Transverse colon (tissue), 4 donors: ENCODE measurements at regions of chr20 and their contacts with region 1.

Region 1: DNA sequence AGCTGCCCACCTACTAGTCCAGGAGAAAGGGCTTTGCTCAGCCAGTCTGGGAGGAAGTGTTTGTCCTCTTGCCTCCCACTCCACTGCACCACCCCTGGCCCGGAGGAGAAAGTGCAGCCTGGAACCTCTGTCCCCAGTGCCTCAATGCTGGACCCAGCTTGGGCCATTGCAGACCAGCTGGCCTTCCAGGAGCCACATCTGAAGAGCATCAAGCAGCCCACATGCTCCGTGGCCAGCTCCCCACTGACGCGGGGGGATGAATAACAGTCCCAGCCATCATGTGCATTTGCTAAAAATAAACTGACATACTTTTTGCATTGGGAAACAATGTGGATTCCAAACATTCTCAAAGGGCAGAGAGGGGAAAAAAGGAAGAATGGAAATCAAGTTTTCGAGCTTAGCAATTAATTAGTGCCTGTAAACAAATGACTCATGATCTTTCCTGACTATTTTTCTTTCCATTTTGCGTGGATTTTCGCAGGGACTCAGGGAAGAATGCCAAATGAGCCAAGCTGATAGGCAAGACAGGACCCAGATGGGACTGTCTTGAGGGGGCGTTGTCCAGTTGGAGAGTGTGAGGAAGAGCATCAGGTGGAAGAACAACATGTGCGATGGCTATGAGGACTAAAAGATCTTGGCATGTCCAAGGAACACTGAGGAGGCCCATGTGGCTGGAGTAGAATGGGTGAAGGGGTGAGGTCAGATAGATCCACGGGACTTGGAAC is 34.1 kb downstream of the CEBPB start:
- DNase-seq: peak; percentile 65
- H3K4me3 ChIP-seq: no peak overlapping the region
- H3K27ac ChIP-seq: peak overlapping the region; percentile 56 to 77 (median 61)
- H3K4me1 ChIP-seq: peaks cover 0 to 6% (median 4%) of the 10 kb centered on the region in 4 donors
- H3K27me3 ChIP-seq: no peaks in the 10 kb centered on the region
- CTCF ChIP-seq: peak in 1 of 5 experiments; percentile 11
- EP300 ChIP-seq: peak; percentile 37
- POLR2A ChIP-seq: no peak

Region 2: GRCh38 chr20:50338479-50339391 is 114.0 kb after region 1 on chr20:
- in situ Hi-C with region 1: loop called in 1 of 4 experiments (anchors 25 kb)
- intact Hi-C with region 1: no loop called
- DNase-seq: no peak
- H3K4me3 ChIP-seq: no peak overlapping the region
- H3K27ac ChIP-seq: peak overlapping the region; percentile 30 to 68 (median 57)
- H3K4me1 ChIP-seq: peaks cover 0 to 10% (median 5%) of the 10 kb centered on the region in 4 donors
- H3K27me3 ChIP-seq: no peaks in the 10 kb centered on the region
- CTCF ChIP-seq: no peak
- EP300 ChIP-seq: no peak
- POLR2A ChIP-seq: no peak